HCT116 (cell line): ENCODE measurements at regions of chr11 and their contacts with region 1.

Region 1: GRCh38 chr11:131694526-131695424 is 324.4 kb downstream of the NTM start:
- DNase-seq: peak; percentile 13
- ATAC-seq: peak; percentile 93
- H3K4me3 ChIP-seq: no peak overlapping the region
- H3K27ac ChIP-seq: no peak overlapping the region
- H3K4me1 ChIP-seq: no peaks in the 10 kb centered on the region
- H3K27me3 ChIP-seq: no peaks in the 10 kb centered on the region
- CTCF ChIP-seq: peak; percentile 66 to 73 (median 66)
- POLR2A ChIP-seq: no peak
- RAD21 ChIP-seq: peak; percentile 59

Region 2: DNA sequence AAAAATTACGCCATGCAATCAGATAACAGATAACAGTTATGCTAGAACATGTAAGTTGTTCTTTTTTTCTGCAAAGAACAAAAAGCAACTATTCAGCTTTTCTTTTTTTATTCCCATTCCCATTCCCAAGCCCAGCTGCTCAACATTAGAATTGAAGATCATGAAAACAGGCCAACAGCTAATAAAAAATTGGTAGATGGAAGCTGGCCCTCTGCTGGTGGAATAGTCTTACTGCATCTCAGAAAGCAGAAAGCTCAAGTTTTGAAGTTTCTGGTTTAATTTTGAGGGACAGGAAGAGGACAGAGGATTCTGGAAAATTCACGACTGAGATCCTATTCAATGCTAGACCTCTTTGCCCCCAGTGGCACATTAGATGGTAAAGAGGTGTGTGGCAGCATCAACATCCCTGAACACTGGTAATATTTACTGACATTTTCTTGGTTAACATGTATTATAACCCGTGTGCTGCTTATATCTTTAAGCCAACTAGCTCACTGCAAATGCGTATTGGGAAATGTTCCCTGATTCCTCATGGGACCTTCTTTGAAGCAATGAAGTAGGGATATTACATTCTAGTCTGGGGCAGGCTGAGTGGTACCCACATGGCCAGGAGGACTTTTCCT is 1246.4 kb after region 1 on chr11:
- CTCF ChIA-PET with region 1: no interaction called
- POLR2A ChIA-PET with region 1: no interaction called
- RAD21 ChIA-PET with region 1: no interaction called
- intact Hi-C with region 1: loop called (anchors 2 kb)
- DNase-seq: no peak
- ATAC-seq: no peak
- H3K4me3 ChIP-seq: no peak overlapping the region
- H3K27ac ChIP-seq: no peak overlapping the region
- H3K4me1 ChIP-seq: no peaks in the 10 kb centered on the region
- H3K27me3 ChIP-seq: no peaks in the 10 kb centered on the region
- CTCF ChIP-seq: peak; percentile 17 to 76 (median 67); a peak in 5 of 6 replicates
- POLR2A ChIP-seq: no peak
- RAD21 ChIP-seq: peak; percentile 39; the same call in 1 of the 2 replicates